Dorsolateral prefrontal cortex (tissue), 120 donors: ENCODE measurements at regions of chr11 and their contacts with region 1.

Region 1: DNA sequence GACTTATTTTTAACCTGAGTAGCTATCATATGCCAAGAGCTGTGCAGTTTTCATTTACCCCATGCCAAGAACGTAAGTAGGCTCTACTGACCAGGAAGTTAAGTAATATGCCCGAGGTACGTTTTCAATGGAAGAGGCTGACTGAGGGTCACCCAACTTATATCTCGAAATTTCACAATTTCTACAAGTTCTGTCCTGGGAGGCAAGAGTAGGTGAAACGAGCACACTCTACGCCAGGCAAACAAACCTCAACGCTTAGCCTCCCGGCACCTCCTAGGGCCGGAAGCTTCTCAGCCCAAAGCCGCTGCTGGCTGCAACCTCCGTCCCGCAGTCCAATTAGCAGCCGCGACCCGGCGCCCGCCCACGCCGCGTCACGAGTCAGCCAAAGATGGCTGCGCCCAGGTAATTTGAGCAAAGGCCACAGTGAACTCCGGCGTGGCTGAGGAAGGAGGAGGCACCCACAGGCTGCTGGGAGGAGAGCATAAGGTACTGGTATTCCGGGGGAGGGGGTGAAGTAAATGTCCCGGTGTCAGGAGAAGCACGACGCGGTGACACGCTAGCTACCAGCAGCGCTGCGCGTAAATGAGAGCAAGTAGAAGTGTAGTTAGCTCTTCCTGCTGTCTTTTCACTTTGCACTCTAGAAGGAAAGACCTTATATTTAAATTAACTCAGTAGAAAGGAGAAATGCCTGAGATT is at the start of gene TMEM126A:
- DNase-seq: peak; percentile 80 to 94 (median 90)
- H3K4me3 ChIP-seq: peak within 1 kb of the TSS; percentile 57 to 92 (median 76)
- H3K27ac ChIP-seq: peak within 1 kb of the TSS; percentile 34 to 91 (median 82)
- H3K27me3 ChIP-seq: no peaks in the 10 kb centered on the region
- CTCF ChIP-seq: peak in 28 of 56 donors; percentile 7 to 51 (median 22)
- total RNA-seq, gene TMEM126A: 17.2 to 40.6 (median 27.3) TPM

Region 2: GRCh38 chr11:85627998-85628770 is 19.6 kb before region 1 on chr11 and contains the start of gene TMEM126B:
- intact Hi-C with region 1: loop called (anchors 1 to 2 kb)
- DNase-seq: peak; percentile 97 to 99 (median 99)
- H3K4me3 ChIP-seq: peak within 1 kb of the TSS; percentile 52 to 94 (median 81)
- H3K27ac ChIP-seq: peak within 1 kb of the TSS; percentile 84 to 99 (median 96)
- H3K27me3 ChIP-seq: no peaks in the 10 kb centered on the region
- CTCF ChIP-seq: peak in 27 of 56 donors; percentile 3 to 56 (median 20)
- total RNA-seq, gene TMEM126B: 33.6 to 78.5 (median 56.3) TPM